Naive thymus-derived CD4-positive, alpha-beta T cell (primary cell): ENCODE measurements at regions of chrX and their contacts with region 1.

Region 1: DNA sequence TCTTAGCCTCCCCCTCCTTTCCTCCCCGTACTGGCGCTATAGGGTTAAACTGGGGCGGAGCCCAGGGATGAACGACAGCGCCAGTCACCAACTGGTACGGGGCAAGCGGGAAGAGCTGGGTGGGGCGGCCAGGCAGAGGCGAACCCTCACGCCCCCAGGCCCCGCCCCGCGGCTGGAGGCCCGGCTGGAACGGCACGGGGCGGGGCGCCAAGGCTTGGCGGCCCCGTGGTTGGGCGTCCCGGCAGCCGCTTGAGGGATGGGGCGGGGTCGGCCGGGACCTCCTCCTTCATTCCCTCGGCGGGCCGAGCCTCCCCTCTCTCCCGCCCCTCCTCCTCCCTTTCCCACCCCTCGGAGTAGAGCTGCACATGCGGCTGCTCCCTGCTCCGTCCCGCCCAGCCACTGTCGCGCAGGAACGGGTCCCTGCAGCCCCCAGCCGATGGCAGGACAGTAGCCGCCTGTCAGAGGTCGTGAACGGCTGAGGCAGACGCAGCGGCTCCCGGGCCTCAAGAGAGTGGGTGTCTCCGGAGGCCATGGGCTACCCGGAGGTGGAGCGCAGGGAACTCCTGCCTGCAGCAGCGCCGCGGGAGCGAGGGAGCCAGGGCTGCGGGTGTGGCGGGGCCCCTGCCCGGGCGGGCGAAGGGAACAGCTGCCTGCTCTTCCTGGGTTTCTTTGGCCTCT is at the start of gene EDA:
- DNase-seq: peak; percentile 26 to 79 (median 51)
- ATAC-seq: peak; percentile 97
- H3K4me3 ChIP-seq: peak within 1 kb of the TSS; percentile 43
- H3K4me3 Mint-ChIP-seq: peak within 1 kb of the TSS; percentile 68 to 89 (median 84)
- H3K27ac ChIP-seq: peak within 1 kb of the TSS; percentile 14
- H3K27ac Mint-ChIP-seq: peak within 1 kb of the TSS in 1 of 9 donors; percentile 67
- H3K4me1 ChIP-seq: no peaks in the 10 kb centered on the region
- H3K4me1 Mint-ChIP-seq: peaks cover 3 to 25% (median 17%) of the 10 kb centered on the region in 7 donors
- H3K27me3 ChIP-seq: no peaks in the 10 kb centered on the region
- H3K27me3 Mint-ChIP-seq: peaks cover 0 to 19% (median 0%) of the 10 kb centered on the region in 5 donors
- total RNA-seq, gene EDA: 2.4 to 14.3 (median 3.2) TPM

Region 2: DNA sequence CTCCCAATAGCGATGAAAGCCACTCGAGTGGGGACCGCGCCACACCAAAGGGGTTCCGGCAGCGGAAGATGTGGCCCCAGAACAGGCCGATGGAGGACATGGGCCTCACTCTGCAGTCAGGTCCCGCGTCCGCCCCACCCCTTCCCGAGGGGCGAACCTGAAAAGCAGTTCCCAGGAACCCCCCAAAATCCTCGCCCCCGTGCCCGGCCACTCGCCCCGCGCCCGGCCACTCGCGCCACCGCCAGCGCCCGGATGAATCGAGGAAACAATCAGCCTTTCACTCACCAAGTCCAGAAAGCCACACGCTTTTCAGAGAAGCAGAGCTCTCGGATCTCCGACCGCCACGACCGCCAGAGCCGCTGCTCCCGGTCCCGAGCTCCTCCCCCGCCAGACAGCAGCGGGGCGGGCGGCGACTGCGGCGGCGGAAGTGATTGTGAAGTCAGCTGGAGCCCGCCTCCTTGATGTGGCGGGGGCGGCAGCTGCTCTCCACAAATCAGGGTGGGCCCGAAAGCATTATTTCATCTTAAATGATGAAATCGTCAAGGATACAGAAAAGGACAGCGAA is 450.7 kb before region 1 on chrX and contains the start of gene PJA1:
- CTCF ChIA-PET with region 1: no interaction called
- POLR2A ChIA-PET with region 1: no interaction called
- intact Hi-C with region 1: loop called in 1 of 2 experiments (anchors 2 kb)
- DNase-seq: peak; percentile 41 to 74 (median 70)
- ATAC-seq: peak; percentile 86
- H3K4me3 ChIP-seq: peak within 1 kb of the TSS; percentile 68
- H3K4me3 Mint-ChIP-seq: peak within 1 kb of the TSS; percentile 69 to 90 (median 85)
- H3K27ac ChIP-seq: peak within 1 kb of the TSS; percentile 81
- H3K27ac Mint-ChIP-seq: peak within 1 kb of the TSS; percentile 80 to 94 (median 92)
- H3K4me1 ChIP-seq: peaks cover 13 to 15% of the 10 kb centered on the region in 2 donors
- H3K4me1 Mint-ChIP-seq: peaks cover 20 to 37% (median 29%) of the 10 kb centered on the region in 7 donors
- H3K27me3 ChIP-seq: no peaks in the 10 kb centered on the region
- H3K27me3 Mint-ChIP-seq: peaks cover 0 to 12% (median 0%) of the 10 kb centered on the region in 5 donors
- total RNA-seq, gene PJA1: 14.4 to 27.0 (median 22.5) TPM

Region 3: GRCh38 chrX:69503782-69504625 is 111.9 kb before region 1 on chrX and contains the start of gene NALF2:
- CTCF ChIA-PET with region 1: no interaction called
- POLR2A ChIA-PET with region 1: no interaction called
- intact Hi-C with region 1: loop called (anchors 2 to 5 kb)
- DNase-seq: peak in 7 of 9 donors; percentile 6 to 39 (median 22)
- ATAC-seq: peak; percentile 60
- H3K4me3 ChIP-seq: no peak within 1 kb of the TSS
- H3K4me3 Mint-ChIP-seq: peak within 1 kb of the TSS; percentile 19 to 89 (median 68)
- H3K27ac ChIP-seq: no peak within 1 kb of the TSS
- H3K27ac Mint-ChIP-seq: no peak within 1 kb of the TSS
- H3K4me1 ChIP-seq: no peaks in the 10 kb centered on the region
- H3K4me1 Mint-ChIP-seq: peaks cover 0 to 3% (median 0%) of the 10 kb centered on the region in 7 donors
- H3K27me3 ChIP-seq: no peaks in the 10 kb centered on the region
- H3K27me3 Mint-ChIP-seq: peaks cover 0 to 30% (median 15%) of the 10 kb centered on the region in 5 donors
- total RNA-seq, gene NALF2: 0.27 to 0.50 (median 0.34) TPM in 3 of 5 experiments, not detected in the others

Region 4: DNA sequence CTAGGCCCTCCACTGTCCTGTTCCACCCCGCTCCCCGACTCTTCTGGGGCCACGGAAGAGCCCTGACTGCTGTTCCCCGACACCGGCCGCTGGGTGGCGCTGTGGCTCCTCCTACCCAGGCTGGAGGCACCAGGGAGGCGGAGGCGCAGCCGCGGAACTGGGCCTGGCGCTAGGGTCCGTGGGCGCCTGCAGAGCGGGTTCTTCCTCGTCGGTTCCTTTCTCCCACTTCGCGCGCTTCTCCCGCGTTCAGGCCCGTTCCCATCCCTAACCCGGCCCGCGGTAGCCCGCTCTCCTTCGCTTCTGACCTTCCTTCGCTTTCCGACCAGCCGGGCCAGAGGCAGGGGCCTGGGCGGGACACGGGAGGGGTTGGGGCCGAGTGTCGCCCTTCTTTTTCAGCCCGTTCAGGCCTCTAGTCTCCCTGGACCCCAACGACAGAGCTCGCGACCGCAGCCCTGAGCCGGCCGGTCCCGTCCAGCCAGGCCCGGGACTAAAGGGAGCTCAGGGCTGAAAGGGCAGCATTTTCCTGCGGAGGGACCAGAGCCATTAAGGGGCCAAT is 77.5 kb before region 1 on chrX:
- CTCF ChIA-PET with region 1: interaction called, 3 read pairs
- POLR2A ChIA-PET with region 1: interaction called, 4 read pairs
- intact Hi-C with region 1: loop called (anchors 1 kb)
- DNase-seq: peak; percentile 30 to 79 (median 58)
- ATAC-seq: peak; percentile 90
- H3K4me3 ChIP-seq: no peak overlapping the region
- H3K4me3 Mint-ChIP-seq: peak overlapping the region in 8 of 10 donors; percentile 14 to 77 (median 61)
- H3K27ac ChIP-seq: no peak overlapping the region
- H3K27ac Mint-ChIP-seq: peak overlapping the region in 1 of 9 donors; percentile 34
- H3K4me1 ChIP-seq: peaks cover 3 to 10% of the 10 kb centered on the region in 2 donors
- H3K4me1 Mint-ChIP-seq: peaks cover 4 to 17% (median 11%) of the 10 kb centered on the region in 7 donors
- H3K27me3 ChIP-seq: no peaks in the 10 kb centered on the region
- H3K27me3 Mint-ChIP-seq: peaks cover 0 to 9% (median 6%) of the 10 kb centered on the region in 5 donors

Region 5: GRCh38 chrX:70133303-70134115 is 517.6 kb after region 1 on chrX and contains the start of gene IGBP1:
- CTCF ChIA-PET with region 1: no interaction called
- POLR2A ChIA-PET with region 1: no interaction called
- intact Hi-C with region 1: loop called (anchors 1 to 5 kb)
- DNase-seq: peak; percentile 40 to 90 (median 82)
- ATAC-seq: peak; percentile 90
- H3K4me3 ChIP-seq: peak within 1 kb of the TSS; percentile 94
- H3K4me3 Mint-ChIP-seq: peak within 1 kb of the TSS; percentile 95 to 99 (median 99)
- H3K27ac ChIP-seq: peak within 1 kb of the TSS; percentile 82
- H3K27ac Mint-ChIP-seq: peak within 1 kb of the TSS; percentile 91 to 99 (median 97)
- H3K4me1 ChIP-seq: peaks cover 16 to 18% of the 10 kb centered on the region in 2 donors
- H3K4me1 Mint-ChIP-seq: peaks cover 14 to 47% (median 29%) of the 10 kb centered on the region in 7 donors
- H3K27me3 ChIP-seq: no peaks in the 10 kb centered on the region
- H3K27me3 Mint-ChIP-seq: no peaks in the 10 kb centered on the region
- total RNA-seq, gene IGBP1: 46.7 to 70.1 (median 58.9) TPM

Region 6: DNA sequence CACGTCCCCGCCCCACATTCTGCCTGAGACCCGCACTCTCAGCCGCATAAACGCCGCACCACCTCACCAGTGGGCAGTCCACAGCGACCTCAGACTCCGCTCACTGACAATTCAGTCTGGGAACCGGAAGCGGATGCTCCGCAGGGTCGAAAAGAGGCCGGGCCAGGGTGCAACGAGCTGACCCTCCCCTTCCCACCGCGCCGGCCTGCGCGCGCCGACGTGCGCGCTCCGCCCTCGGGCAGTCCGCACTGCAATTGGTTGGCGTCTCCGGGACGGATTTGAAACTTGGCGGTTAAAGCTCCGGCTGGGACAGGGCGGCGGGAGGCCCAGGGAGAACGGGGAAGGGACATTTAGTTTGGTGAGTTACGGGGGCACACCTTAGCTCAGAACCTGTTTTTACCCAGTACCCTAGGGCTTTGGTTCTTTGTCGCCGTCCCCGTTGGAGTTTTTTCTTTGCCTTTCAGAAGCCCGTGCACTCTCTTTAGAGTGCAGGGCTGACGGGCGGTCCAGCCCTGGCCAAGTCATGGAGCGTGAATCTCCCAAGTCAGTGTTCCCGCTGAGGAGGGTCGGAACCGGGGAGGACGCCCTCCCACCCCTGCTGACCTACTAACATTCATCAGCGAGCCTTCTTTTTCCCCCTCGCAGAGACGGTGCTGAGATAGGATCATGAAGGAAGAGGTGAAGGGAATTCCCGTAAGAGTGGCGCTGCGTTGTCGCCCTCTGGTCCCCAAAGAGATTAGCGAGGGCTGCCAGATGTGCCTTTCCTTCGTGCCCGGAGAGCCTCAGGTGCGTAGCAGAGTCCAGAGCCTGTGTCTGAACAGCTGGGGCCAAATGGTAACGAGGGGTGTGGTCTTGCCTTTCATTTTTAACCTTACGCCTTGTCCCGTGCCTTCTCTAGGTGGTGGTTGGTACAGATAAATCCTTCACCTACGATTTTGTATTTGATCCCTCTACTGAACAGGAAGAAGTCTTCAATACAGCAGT is 674.2 kb after region 1 on chrX and contains the starts of genes KIF4A and PDZD11:
- CTCF ChIA-PET with region 1: no interaction called
- POLR2A ChIA-PET with region 1: no interaction called
- intact Hi-C with region 1: loop called in 1 of 2 experiments (anchors 10 kb)
- DNase-seq: peak; percentile 47 to 86 (median 63)
- ATAC-seq: peak; percentile 99
- H3K4me3 ChIP-seq: peak within 1 kb of the TSS; percentile 89
- H3K4me3 Mint-ChIP-seq: peak within 1 kb of the TSS; percentile 84 to 93 (median 88)
- H3K27ac ChIP-seq: peak within 1 kb of the TSS; percentile 60
- H3K27ac Mint-ChIP-seq: peak within 1 kb of the TSS; percentile 36 to 92 (median 84)
- H3K4me1 ChIP-seq: peaks cover 5 to 9% of the 10 kb centered on the region in 2 donors
- H3K4me1 Mint-ChIP-seq: peaks cover 0 to 27% (median 15%) of the 10 kb centered on the region in 7 donors
- H3K27me3 ChIP-seq: no peaks in the 10 kb centered on the region
- H3K27me3 Mint-ChIP-seq: no peaks in the 10 kb centered on the region
- total RNA-seq, gene KIF4A: 0.20 to 26.5 (median 0.21) TPM in 4 of 5 experiments, not detected in the other
- total RNA-seq, gene PDZD11: 5.9 to 34.1 (median 10.8) TPM